Head of caudate nucleus (tissue), 42 donors: ENCODE measurements at regions of chr5 and their contacts with region 1.

Region 1: GRCh38 chr5:37005946-37006540 is 129.5 kb downstream of the NIPBL start:
- DNase-seq: no peak

Region 2: DNA sequence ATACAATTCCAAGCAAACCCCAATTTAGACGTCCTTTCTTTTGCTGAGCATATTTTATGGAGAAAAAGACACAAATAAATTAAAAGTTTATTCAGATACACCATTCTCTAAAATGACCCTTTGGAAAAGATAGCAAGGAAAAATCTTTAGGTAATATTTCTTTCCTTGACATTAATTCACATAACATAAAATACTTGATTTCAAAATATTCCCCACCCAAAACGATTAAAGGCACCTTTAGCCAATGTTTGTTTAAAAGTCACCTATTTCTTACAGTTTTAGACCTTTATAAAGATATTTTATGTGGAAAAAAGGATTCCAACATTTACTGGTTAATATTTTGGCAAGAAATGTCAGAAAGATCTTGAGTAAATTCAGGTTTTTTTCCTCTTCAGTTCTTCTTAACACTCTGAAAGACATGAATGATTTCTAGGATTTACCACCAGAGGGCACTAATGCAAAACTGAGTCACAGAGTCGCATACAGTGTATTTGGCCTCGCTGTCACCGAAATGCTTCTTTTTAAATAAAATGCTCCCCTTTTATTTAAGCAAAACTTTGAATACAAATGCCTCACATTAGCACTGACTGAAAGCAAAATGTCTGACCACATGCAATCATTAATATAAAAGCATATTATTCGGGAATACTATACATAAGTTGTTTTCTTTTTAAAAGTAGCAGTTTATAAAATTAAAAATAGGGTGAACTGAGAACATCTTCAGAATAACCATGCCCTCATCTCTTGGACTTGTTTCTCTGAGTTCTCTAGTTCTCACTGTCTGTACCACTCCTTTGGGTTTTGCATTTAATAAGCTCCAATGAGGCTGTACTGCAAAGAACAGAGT is 277.1 kb before region 1 on chr5:
- intact Hi-C with region 1: loop called (anchors 10 kb)
- DNase-seq: peak in 14 of 42 donors; percentile 12 to 73 (median 32)

Region 3: GRCh38 chr5:37063739-37064138 is 57.7 kb after region 1 on chr5:
- intact Hi-C with region 1: no loop called
- DNase-seq: peak in 24 of 42 donors; percentile 10 to 81 (median 44)